ENCODE measurements at regions of chr2 and their contacts with region 1.

Region 1: DNA sequence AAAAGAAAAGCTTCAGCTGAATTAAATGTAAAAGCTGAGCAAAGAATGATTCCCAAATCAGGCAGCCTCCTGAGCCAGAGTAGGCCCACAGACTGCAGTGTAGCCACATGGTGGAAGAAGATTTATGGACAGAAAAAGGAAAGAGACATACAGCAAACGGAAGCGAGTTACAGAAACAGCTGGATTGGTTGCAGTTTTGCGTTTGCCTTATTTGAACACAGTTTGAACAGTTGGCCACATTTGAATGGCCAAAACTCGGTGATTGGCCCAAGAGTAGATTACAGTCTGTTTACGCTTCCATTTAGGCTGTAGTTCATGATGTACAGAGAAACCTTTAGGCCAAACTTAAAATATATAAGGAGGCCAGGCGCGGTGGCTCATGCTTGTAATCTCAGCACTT is 35.1 kb downstream of the SH2D6 start:
- DNase-seq: no peak
- ATAC-seq: no peak
- H3K4me3 ChIP-seq: no peak overlapping the region
- H3K4me3 Mint-ChIP-seq: no peak overlapping the region
- H3K27ac ChIP-seq: no peak overlapping the region
- H3K27ac Mint-ChIP-seq: no peak overlapping the region
- H3K4me1 ChIP-seq: no peaks in the 10 kb centered on the region
- H3K4me1 Mint-ChIP-seq: peaks cover 0 to 2% (median 0%) of the 10 kb centered on the region in 7 donors
- H3K27me3 ChIP-seq: no peaks in the 10 kb centered on the region
- H3K27me3 Mint-ChIP-seq: peaks cover 0 to 11% (median 0%) of the 10 kb centered on the region in 5 donors

Region 2: DNA sequence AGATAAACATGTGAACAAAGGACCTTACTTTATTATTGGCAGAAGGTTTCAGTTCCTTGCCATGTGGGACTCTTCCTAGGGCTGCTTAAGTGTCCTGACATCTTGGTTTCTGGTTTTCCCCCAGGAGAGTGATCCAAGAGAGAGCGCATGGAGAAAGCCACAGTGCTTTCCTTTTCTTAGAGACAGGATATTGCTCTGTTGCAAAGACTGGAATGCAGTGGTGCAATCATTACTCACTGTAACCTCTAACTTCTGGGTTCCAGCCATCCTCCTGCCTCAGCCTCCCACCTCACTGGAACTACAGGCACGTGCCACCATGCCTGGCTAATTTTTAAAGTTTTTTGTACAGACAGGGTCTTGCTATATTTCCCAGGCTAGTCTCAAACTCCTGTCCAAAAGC is 358.5 kb before region 1 on chr2:
- CTCF ChIA-PET with region 1: no interaction called
- POLR2A ChIA-PET with region 1: no interaction called
- intact Hi-C with region 1: no loop called
- DNase-seq: no peak
- ATAC-seq: no peak
- H3K4me3 ChIP-seq: no peak overlapping the region
- H3K4me3 Mint-ChIP-seq: no peak overlapping the region
- H3K27ac ChIP-seq: no peak overlapping the region
- H3K27ac Mint-ChIP-seq: no peak overlapping the region
- H3K4me1 ChIP-seq: no peaks in the 10 kb centered on the region
- H3K4me1 Mint-ChIP-seq: no peaks in the 10 kb centered on the region
- H3K27me3 ChIP-seq: no peaks in the 10 kb centered on the region
- H3K27me3 Mint-ChIP-seq: peaks cover 7 to 23% (median 19%) of the 10 kb centered on the region in 5 donors

Region 3: GRCh38 chr2:85504778-85505323 is 51.3 kb after region 1 on chr2:
- CTCF ChIA-PET with region 1: no interaction called
- POLR2A ChIA-PET with region 1: no interaction called
- intact Hi-C with region 1: loop called in 1 of 2 experiments (anchors 5 kb)
- DNase-seq: no peak
- ATAC-seq: no peak
- H3K4me3 ChIP-seq: no peak overlapping the region
- H3K4me3 Mint-ChIP-seq: no peak overlapping the region
- H3K27ac ChIP-seq: no peak overlapping the region
- H3K27ac Mint-ChIP-seq: no peak overlapping the region
- H3K4me1 ChIP-seq: no peaks in the 10 kb centered on the region
- H3K4me1 Mint-ChIP-seq: peaks cover 0 to 5% (median 0%) of the 10 kb centered on the region in 7 donors
- H3K27me3 ChIP-seq: no peaks in the 10 kb centered on the region
- H3K27me3 Mint-ChIP-seq: peaks cover 0 to 4% (median 0%) of the 10 kb centered on the region in 5 donors